ENCODE measurements at regions of chr9 and their contacts with region 1.

Region 1: GRCh38 chr9:129177791-129178559 is at the start of gene IER5L:
- DNase-seq: peak; percentile 93 to 100 (median 98)

Region 2: DNA sequence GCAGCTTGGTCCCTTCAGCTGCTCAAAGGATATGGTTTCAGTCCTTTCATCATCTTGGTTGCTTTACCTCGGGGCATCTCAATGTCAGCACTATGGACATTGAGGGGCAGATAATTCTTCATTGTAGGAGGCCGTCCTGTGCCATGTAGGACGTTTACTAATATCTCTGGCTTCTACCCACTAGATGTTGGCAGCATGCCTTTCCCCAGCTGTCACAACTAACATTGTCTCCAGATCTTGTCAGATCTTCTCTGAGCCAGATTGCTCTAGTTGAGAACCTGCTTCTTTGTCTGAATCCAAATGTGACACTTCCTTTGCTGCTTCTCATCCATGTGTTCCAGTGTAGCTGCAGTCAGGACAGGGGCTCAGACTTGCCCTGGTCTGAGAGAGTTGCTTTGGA is 56.5 kb before region 1 on chr9:
- intact Hi-C with region 1: no loop called
- DNase-seq: peak in 3 of 10 donors; percentile 49 to 62 (median 54)

Region 3: GRCh38 chr9:129139993-129140396 is 38.0 kb before region 1 on chr9:
- intact Hi-C with region 1: loop called (anchors 2 kb)
- DNase-seq: peak; percentile 66 to 96 (median 79)

Region 4: DNA sequence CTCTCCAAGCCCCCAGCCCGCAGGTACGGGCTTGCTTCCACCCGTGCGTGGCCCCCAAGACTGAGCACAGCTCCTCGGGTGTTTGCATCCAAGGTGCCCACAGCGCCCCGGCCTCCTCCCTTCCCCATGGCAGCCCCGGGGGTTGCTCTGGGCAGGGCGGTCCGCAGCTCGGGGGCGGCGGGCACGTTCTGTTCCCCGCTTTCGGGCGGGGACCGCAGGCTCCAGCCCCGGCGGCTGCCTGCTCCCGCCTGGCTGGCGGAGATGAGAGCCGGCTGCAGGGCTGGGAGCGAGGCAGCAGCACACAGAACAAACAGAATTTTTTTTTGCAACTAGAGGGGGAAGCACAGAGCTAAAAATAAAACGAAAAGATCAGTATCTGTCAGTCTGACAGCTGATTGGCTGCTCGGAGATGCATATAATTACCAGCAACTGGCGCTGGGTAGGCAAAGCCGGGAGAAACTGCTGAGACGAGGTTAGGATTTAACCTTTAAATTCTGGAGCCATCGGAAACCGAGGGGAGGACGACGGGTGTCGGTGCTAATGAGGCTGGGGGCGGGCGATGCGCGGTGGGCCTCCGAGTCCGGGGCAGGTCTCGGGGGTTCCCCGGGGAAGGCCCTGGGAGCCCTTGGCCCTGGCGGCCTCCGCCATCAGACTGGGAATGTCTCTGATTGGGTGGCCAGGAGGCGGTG is 142.7 kb after region 1 on chr9:
- intact Hi-C with region 1: loop called (anchors 5 kb)
- DNase-seq: peak; percentile 48 to 96 (median 66)

Region 5: GRCh38 chr9:129610473-129611301 is 432.7 kb after region 1 on chr9:
- intact Hi-C with region 1: loop called (anchors 1 kb)
- DNase-seq: peak; percentile 54 to 96 (median 78)